ENCODE measurements at regions of chr9 and their contacts with region 1.

Region 1: DNA sequence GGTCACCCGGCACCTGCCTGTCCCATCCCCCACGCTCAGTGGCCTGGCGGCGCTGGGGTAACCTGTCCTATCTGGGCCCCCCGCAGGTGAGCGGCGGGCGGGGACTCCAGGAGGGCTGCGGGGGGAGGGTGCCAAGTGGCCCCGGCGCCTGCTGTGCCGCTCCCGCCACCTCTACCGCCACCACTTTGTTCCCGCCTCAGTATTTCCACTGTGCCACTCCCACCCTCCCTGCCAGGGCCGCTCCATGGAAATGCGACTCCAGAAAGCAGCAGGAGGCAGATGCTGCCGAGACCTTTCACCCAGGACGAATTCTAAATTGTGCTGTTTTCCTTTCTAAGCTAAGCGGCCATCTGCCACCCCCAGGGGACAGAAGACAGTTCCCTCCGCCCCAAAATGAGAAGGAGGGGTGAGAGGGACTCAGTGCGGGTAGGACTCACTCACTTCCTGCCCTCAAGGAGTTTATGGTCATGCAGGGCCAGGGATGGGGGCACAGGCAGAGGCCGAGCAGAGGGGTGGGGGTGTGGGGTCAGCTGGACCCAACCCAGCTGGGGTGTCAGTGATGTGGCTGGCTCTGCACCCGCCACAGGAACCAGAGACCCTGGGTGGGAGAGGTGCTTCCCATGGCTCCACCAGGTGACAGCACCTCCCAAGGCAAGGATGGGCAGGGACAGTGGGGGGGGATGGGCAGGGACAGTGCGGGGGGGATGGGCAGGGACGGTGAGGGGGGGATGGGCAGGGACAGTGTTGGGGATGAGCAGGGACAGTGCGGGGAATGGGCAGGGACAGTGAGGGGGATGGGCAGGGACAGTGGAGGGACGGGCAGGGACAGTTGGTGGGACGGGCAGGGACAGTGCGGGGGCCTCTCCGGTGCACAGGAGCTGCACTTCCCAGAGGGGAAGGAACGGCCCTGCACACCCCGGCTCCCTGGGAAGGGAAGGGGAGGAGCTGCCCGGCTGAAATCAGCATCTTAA is 17.8 kb downstream of the NOTCH1 start:
- DNase-seq: no peak

Region 2: DNA sequence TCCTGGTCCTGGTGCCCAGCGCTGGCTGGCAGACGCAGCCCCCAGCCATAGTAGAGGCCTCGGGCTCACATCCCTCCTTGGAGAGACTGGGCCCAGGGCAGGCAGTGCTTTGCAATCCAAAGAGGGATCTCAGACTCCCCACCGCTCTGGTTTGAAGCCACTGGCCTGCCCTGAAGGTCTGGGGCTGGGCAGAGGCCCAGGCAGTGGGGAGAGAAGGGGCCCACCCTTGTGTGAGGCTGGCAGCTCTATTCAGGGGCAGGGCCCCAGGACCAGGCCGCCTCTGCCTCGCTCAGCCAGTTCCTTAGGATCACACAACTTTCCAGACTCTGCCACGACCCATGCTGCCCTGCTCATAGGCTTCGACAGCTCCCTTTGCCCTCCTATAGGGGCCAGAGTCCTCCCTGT is 34.4 kb before region 1 on chr9:
- intact Hi-C with region 1: loop called (anchors 5 kb)
- DNase-seq: peak in 2 of 10 donors; percentile 47 to 52

Region 3: DNA sequence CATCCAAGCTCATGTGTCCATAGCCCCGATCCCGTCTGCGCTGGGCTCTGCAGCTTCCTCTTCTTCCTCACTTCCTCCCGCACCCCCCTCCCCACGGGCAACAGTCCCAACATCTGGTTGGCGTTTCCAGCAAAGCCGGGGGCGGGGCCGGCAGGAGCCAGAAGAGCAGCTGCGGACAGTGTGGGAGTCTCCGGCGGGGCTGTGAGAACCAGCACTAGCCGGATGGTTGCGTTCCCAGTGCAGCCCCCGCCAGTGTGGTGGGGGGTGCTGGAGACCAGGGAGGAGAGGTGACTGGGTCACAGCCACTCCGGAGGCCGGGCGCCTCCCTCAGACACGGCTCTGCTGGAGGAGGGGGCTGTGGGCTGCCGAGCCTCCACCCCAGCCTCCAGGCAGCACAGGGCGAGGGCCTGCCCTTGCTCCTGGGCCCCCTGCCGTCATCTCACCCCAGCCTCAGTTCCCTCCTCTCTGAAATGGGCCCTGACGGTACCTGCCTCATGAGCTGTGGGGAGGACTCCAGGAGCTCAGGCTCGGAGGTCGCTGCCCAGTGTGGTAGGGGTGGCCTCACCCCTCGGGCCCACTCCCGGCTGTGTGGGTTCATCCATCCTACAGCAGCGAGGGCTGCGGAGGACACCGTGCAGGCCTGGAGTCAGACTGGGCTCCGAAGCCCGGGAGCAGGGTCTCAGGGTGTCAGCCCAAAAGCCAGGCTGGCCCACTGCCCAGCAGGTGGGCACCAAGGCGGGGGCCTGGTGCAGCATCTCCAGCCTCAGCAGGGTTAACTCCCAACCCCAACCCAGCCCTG is 59.3 kb after region 1 on chr9:
- intact Hi-C with region 1: no loop called
- DNase-seq: peak in 5 of 10 donors; percentile 37 to 94 (median 57)

Measured in posterior cingulate gyrus (tissue), 11 donors.